ENCODE measurements at regions of chr1 and their contacts with region 1.

Region 1: GRCh38 chr1:156054500-156055280 is at the start of gene LAMTOR2:
- DNase-seq: peak; percentile 95
- H3K4me3 Mint-ChIP-seq: peak within 1 kb of the TSS; percentile 96
- H3K27ac Mint-ChIP-seq: peak within 1 kb of the TSS; percentile 94
- H3K4me1 Mint-ChIP-seq: peaks cover 33% of the 10 kb centered on the region
- H3K27me3 Mint-ChIP-seq: no peaks in the 10 kb centered on the region
- total RNA-seq, gene LAMTOR2: 66.8 and 67.1 TPM in 2 replicates

Region 2: GRCh38 chr1:155277070-155277895 is 777.4 kb before region 1 on chr1 and contains the start of gene HCN3:
- intact Hi-C with region 1: loop called (anchors 10 kb)
- DNase-seq: peak; percentile 91
- H3K4me3 Mint-ChIP-seq: peak within 1 kb of the TSS; percentile 83
- H3K27ac Mint-ChIP-seq: peak within 1 kb of the TSS; percentile 62
- H3K4me1 Mint-ChIP-seq: peaks cover 38% of the 10 kb centered on the region
- H3K27me3 Mint-ChIP-seq: peaks cover 7% of the 10 kb centered on the region
- total RNA-seq, gene HCN3: 2.5 and 3.3 TPM in 2 replicates

Region 3: GRCh38 chr1:155744711-155745283 is 309.9 kb before region 1 on chr1:
- intact Hi-C with region 1: no loop called
- DNase-seq: no peak
- H3K4me3 Mint-ChIP-seq: peak overlapping the region; percentile 99
- H3K27ac Mint-ChIP-seq: peak overlapping the region; percentile 95
- H3K4me1 Mint-ChIP-seq: peaks cover 12% of the 10 kb centered on the region
- H3K27me3 Mint-ChIP-seq: no peaks in the 10 kb centered on the region

Region 4: GRCh38 chr1:155934097-155934935 is 120.4 kb before region 1 on chr1 and contains the start of gene KHDC4:
- intact Hi-C with region 1: loop called (anchors 1 kb)
- DNase-seq: peak; percentile 94
- H3K4me3 Mint-ChIP-seq: no peak within 1 kb of the TSS
- H3K27ac Mint-ChIP-seq: peak within 1 kb of the TSS; percentile 61
- H3K4me1 Mint-ChIP-seq: peaks cover 39% of the 10 kb centered on the region
- H3K27me3 Mint-ChIP-seq: no peaks in the 10 kb centered on the region
- total RNA-seq, gene KHDC4: 80.1 and 81.8 TPM in 2 replicates

Region 5: GRCh38 chr1:156065212-156065611 is 10.5 kb after region 1 on chr1:
- intact Hi-C with region 1: loop called (anchors 1 kb)
- DNase-seq: no peak
- H3K4me3 Mint-ChIP-seq: no peak overlapping the region
- H3K27ac Mint-ChIP-seq: peak overlapping the region; percentile 5
- H3K4me1 Mint-ChIP-seq: peaks cover 16% of the 10 kb centered on the region
- H3K27me3 Mint-ChIP-seq: peaks cover 4% of the 10 kb centered on the region

Region 6: DNA sequence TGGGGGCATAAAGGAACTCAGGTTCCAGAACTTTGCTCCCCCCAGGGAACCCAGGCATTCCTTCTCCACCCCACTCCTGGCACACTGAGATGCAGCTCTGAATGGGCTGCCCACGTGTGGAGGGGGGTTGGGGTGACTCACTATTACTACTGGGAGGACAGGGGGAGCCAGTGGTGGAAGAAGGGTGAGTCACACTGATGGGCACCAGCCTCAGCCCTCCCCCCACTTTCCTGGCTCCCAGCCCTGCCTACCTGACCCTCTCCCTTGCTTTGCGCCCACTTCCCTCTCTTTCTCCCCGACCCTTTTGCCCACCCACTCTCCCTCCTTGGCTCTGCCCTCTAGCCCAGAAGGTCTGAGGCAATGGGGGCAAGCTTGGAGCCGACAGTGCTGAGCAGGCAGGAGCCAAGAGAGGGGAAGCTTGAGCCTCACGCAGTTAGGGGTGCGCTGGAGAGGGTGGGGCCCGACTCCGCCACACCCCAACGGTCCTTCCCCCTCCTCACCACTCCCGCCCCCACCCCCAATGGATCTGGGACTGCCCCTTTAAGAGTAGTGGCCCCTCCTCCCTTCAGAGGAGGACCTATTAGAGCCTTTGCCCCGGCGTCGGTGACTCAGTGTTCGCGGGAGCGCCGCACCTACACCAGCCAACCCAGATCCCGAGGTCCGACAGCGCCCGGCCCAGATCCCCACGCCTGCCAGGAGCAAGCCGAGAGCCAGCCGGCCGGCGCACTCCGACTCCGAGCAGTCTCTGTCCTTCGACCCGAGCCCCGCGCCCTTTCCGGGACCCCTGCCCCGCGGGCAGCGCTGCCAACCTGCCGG is 59.6 kb after region 1 on chr1 and contains the start of gene LMNA:
- intact Hi-C with region 1: loop called (anchors 2 kb)
- DNase-seq: peak; percentile 57
- H3K4me3 Mint-ChIP-seq: peak within 1 kb of the TSS; percentile 91
- H3K27ac Mint-ChIP-seq: peak within 1 kb of the TSS; percentile 76
- H3K4me1 Mint-ChIP-seq: peaks cover 25% of the 10 kb centered on the region
- H3K27me3 Mint-ChIP-seq: peaks cover 53% of the 10 kb centered on the region
- total RNA-seq, gene LMNA: 80.1 and 84.1 TPM in 2 replicates

Region 7: GRCh38 chr1:156282479-156283222 is 228.0 kb after region 1 on chr1 and contains the start of gene SMG5:
- intact Hi-C with region 1: loop called (anchors 1 kb)
- DNase-seq: peak; percentile 94
- H3K4me3 Mint-ChIP-seq: peak within 1 kb of the TSS; percentile 91
- H3K27ac Mint-ChIP-seq: peak within 1 kb of the TSS; percentile 93
- H3K4me1 Mint-ChIP-seq: peaks cover 44% of the 10 kb centered on the region
- H3K27me3 Mint-ChIP-seq: peaks cover 1% of the 10 kb centered on the region
- total RNA-seq, gene SMG5: 95.6 TPM in 2 replicates

Region 8: GRCh38 chr1:156767101-156767878 is 712.6 kb after region 1 on chr1 and contains the start of gene PRCC:
- intact Hi-C with region 1: loop called (anchors 5 kb)
- DNase-seq: peak; percentile 97
- H3K4me3 Mint-ChIP-seq: no peak within 1 kb of the TSS
- H3K27ac Mint-ChIP-seq: no peak within 1 kb of the TSS
- H3K4me1 Mint-ChIP-seq: peaks cover 46% of the 10 kb centered on the region
- H3K27me3 Mint-ChIP-seq: no peaks in the 10 kb centered on the region
- total RNA-seq, gene PRCC: 117 TPM in 2 replicates

Measured in activated T-helper 1 cell treated with anti-CD3 and anti-CD28 coated beads, Interleukin-12 subunit alpha, Interleukin-12 subunit beta, Interleukin-2, Interleukin-4 antibody, amounts not matched to agents 30 ng/mL and 10 ng/mL and 1 ng/mL, durations not matched to agents 14 hours and 24 hours and 36 hours (primary cell).